H1 (cell line): ENCODE measurements at regions of chr20 and their contacts with region 1.

Region 1: DNA sequence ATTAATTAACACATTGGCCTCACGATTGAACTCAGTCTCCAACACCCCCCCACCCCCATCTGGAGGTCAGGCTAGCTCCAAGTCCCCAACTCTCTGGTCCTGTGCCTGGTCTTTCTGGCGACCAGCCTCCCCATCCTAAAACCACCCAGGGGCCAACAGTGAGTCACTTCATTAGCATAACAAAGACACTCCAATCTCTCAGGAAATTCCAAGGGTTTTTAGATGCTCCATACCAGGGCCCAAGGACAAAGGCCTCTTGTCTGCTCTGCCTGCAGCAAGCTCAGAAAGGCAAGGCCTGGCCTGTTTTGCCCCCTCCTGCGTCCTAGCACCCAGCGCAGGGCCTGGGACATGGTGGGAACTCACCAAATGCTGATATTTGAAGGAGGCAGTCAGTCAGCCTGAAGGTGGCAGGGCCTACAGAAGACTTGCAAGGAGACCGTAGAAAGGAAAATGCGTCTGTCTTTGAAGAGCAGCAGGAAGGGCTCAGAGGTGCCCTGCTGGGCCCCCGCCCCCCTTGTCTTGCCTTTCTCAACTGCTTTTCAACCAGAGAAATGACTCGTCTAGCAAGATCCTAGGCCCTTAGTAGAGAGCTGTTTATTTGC is 184.7 kb downstream of the CDH4 start:
- DNase-seq: peak; percentile 84 to 96
- H3K4me3 ChIP-seq: peak overlapping the region in 3 of 4 experiments; percentile 6 to 39 (median 19); a peak in 4 of 8 replicates
- H3K27ac ChIP-seq: peak overlapping the region; percentile 97
- H3K4me1 ChIP-seq: peaks cover 19 to 56% (median 32%) of the 10 kb centered on the region in 4 experiments
- H3K27me3 ChIP-seq: no peaks in the 10 kb centered on the region
- CTCF ChIP-seq: no peak
- EP300 ChIP-seq: peak in 1 of 2 experiments; percentile 90; a peak in 2 of 3 replicates
- POLR2A ChIP-seq: peak; percentile 77 to 82
- RAD21 ChIP-seq: peak; percentile 21 to 22; a peak in 3 of 4 replicates

Region 2: DNA sequence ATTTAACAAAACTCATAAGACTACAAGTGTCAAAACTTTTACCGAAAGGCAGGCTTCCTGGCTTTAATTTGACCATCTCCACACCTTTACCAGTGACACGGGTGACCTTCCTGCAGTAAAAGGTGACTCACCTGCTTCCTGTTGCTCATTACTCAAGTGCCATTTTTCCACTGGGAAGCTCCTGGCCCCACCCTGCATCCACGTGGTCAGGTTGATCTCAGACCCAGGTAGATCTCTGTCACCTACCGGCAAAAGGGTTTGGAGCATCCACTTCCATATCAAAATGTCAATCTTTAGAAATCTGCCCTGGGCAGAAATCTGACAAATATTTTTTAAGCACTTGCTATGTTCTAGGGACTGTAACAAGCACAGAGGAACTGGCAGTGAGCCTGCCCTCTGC is 216.6 kb before region 1 on chr20:
- CTCF ChIA-PET with region 1: no interaction called
- POLR2A ChIA-PET with region 1: no interaction called
- DNase-seq: no peak
- H3K4me3 ChIP-seq: no peak overlapping the region
- H3K27ac ChIP-seq: no peak overlapping the region
- H3K4me1 ChIP-seq: no peaks in the 10 kb centered on the region
- H3K27me3 ChIP-seq: peaks cover 4 to 42% (median 20%) of the 10 kb centered on the region in 4 experiments
- CTCF ChIP-seq: no peak
- EP300 ChIP-seq: no peak
- POLR2A ChIP-seq: no peak
- RAD21 ChIP-seq: no peak

Region 3: DNA sequence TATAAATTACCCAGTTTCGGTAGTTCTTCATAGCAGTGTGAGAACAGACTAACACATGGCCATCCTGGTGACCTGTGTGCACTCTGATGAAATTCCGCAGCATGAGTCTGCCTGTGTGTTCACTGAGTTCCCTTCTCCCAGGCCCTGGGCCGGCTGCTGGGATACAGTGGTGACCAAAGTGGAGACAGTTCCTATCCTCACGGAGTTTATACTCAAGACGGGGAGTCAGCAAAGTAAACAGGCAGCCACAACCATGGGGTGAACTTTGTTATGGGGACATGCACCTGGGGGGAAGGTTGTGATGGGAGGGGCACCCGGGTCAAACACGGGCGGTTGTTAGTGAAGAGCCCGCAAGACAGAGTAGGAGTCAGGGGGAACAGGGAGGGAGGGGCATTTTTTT is 17.3 kb after region 1 on chr20:
- CTCF ChIA-PET with region 1: interaction called, 4 read pairs
- POLR2A ChIA-PET with region 1: interaction called, 25 read pairs
- DNase-seq: no peak
- H3K4me3 ChIP-seq: no peak overlapping the region
- H3K27ac ChIP-seq: no peak overlapping the region
- H3K4me1 ChIP-seq: peaks cover 1 to 11% (median 8%) of the 10 kb centered on the region in 4 experiments
- H3K27me3 ChIP-seq: peaks cover 0 to 4% (median 0%) of the 10 kb centered on the region in 4 experiments; a peak in 2 of 7 replicates
- CTCF ChIP-seq: no peak
- EP300 ChIP-seq: no peak
- POLR2A ChIP-seq: no peak
- RAD21 ChIP-seq: no peak